ENCODE measurements at regions of chr1 and their contacts with region 1.

Region 1: GRCh38 chr1:235259133-235259778 is 68.7 kb downstream of the ARID4B start:
- DNase-seq: no peak
- H3K4me3 Mint-ChIP-seq: peak overlapping the region; percentile 4
- H3K27ac Mint-ChIP-seq: peak overlapping the region; percentile 60
- H3K4me1 Mint-ChIP-seq: peaks cover 23% of the 10 kb centered on the region
- H3K27me3 Mint-ChIP-seq: no peaks in the 10 kb centered on the region

Region 2: DNA sequence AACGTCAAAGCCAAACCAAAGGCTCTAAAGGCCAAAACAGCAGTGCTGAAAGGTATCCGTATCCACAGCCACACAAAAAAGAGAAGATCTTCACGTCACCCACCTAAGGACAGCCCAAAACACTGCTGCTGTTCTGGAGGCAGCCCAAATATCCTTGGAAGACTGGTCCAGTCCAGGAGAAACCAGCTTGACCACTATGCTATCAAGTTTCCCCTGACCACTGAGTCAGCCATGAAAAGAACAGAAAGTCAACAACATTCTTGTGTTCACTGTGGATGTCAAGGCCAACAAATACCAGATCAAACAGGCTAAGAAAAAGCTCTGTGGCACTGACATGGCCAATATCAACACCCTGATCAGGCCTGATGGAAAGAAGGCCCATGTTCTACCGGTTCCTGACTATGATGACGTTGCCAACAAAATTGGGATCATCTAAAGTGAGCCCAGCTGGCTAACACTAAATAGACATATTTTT is 36.7 kb after region 1 on chr1:
- intact Hi-C with region 1: loop called (anchors 5 kb)
- DNase-seq: no peak
- H3K4me3 Mint-ChIP-seq: no peak overlapping the region
- H3K27ac Mint-ChIP-seq: no peak overlapping the region
- H3K4me1 Mint-ChIP-seq: peaks cover 40% of the 10 kb centered on the region
- H3K27me3 Mint-ChIP-seq: no peaks in the 10 kb centered on the region

Region 3: GRCh38 chr1:235317168-235317567 is 57.9 kb after region 1 on chr1:
- intact Hi-C with region 1: loop called (anchors 5 kb)
- DNase-seq: no peak
- H3K4me3 Mint-ChIP-seq: peak overlapping the region; percentile 41
- H3K27ac Mint-ChIP-seq: peak overlapping the region; percentile 73
- H3K4me1 Mint-ChIP-seq: peaks cover 67% of the 10 kb centered on the region
- H3K27me3 Mint-ChIP-seq: no peaks in the 10 kb centered on the region

Region 4: GRCh38 chr1:235567812-235568503 is 308.7 kb after region 1 on chr1:
- intact Hi-C with region 1: no loop called
- DNase-seq: peak; percentile 69
- H3K4me3 Mint-ChIP-seq: peak overlapping the region; percentile 15
- H3K27ac Mint-ChIP-seq: peak overlapping the region; percentile 54
- H3K4me1 Mint-ChIP-seq: peaks cover 13% of the 10 kb centered on the region
- H3K27me3 Mint-ChIP-seq: no peaks in the 10 kb centered on the region

Measured in activated CD4-positive, alpha-beta T cell treated with anti-CD3 and anti-CD28 coated beads, Interleukin-2, amount 10 ng/mL, durations not matched to agents 24 days and 14 days (primary cell).